ENCODE measurements at regions of chr12 and their contacts with region 1.

Region 1: DNA sequence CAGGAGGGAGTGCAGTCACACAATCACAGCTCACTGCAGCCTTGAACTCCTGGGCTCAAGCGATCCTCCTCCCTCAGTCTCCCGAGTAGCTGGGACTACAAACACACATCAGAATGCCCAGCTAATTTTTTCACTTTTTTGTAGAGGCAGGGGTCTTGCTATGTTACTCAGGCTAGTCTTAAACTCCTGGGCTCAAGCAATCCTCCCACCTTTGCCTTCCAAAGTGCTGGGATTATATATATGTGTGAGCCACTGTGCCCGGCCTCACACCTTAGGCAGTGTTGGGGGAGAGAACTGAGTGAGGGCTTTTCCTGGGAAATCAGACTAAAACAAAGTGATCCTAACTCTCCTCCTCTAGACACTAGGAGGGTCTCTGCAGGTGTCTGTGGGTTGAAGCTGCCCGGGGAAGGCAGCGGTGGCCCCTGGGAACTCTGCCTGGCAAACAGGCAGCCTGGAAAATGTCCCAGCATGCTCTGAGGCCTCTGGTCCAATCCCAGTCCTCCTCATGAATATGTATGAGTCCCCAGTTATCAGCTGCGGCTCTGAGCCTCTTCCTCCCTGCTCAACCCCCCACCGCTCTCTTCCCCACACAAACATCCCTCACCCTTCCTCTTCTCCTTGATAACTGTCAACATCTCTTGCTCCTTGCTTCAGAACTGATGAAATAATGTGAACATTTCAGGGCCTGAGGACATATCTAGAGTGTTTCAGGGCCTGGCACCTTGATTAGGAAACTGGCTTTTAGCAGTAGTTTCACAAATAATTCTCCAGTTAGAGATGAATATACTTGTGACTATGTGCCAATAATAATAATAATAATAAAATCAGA is 7.9 kb upstream of the NAA25 start:
- H3K4me3 ChIP-seq: no peak overlapping the region
- H3K27ac ChIP-seq: peak overlapping the region; percentile 68
- H3K4me1 ChIP-seq: peaks cover 10% of the 10 kb centered on the region
- CTCF ChIP-seq: no peak

Region 2: DNA sequence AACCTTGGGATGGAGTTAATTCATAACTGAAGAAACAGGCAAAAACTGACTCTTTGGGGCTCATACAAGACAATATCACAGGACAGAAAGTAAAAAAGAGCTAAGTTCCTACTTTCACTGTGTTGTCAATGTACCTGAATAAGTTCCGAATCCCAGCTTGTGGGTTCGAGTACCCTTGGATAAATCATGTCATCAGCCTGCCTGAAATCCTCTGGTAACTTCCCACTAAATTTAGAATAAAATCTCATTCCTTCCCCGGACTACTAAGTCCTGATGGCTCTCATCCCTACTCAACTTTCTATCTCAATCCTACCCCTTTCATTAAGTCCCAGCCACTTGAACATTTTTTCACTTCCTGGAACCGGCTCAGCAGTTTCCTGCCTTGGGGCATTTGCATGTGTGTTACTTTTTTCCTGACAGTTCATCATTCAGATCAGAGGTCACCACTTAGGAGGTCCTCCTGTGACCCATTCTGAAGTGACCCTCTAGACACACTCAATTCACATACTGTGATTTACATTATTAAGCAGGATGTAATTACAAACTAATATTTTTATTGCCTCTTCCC is 90.6 kb before region 1 on chr12:
- CTCF ChIA-PET with region 1: no interaction called
- POLR2A ChIA-PET with region 1: interaction called, 13 read pairs
- H3K4me3 ChIP-seq: no peak overlapping the region
- H3K27ac ChIP-seq: no peak overlapping the region
- H3K4me1 ChIP-seq: no peaks in the 10 kb centered on the region
- CTCF ChIP-seq: no peak

Region 3: GRCh38 chr12:112183141-112184021 is 66.9 kb after region 1 on chr12:
- CTCF ChIA-PET with region 1: no interaction called
- POLR2A ChIA-PET with region 1: no interaction called
- H3K4me3 ChIP-seq: no peak overlapping the region
- H3K27ac ChIP-seq: no peak overlapping the region
- H3K4me1 ChIP-seq: no peaks in the 10 kb centered on the region
- CTCF ChIP-seq: no peak

Measured in HEK293 (cell line).